HCT116 (cell line): ENCODE measurements at regions of chr15 and their contacts with region 1.

Region 1: GRCh38 chr15:78108299-78109084 is 16.1 kb downstream of the SH2D7 start:
- DNase-seq: peak; percentile 79
- ATAC-seq: peak; percentile 97
- H3K4me3 ChIP-seq: no peak overlapping the region
- H3K27ac ChIP-seq: no peak overlapping the region
- H3K4me1 ChIP-seq: 0 out of 4 replicates have a peak, but pooled peaks cover 0 to 6% of the 10 kb centered on the region in 2 experiments
- H3K27me3 ChIP-seq: no peaks in the 10 kb centered on the region
- CTCF ChIP-seq: peak; percentile 89 to 98 (median 96)
- POLR2A ChIP-seq: no peak
- RAD21 ChIP-seq: peak; percentile 92

Region 2: DNA sequence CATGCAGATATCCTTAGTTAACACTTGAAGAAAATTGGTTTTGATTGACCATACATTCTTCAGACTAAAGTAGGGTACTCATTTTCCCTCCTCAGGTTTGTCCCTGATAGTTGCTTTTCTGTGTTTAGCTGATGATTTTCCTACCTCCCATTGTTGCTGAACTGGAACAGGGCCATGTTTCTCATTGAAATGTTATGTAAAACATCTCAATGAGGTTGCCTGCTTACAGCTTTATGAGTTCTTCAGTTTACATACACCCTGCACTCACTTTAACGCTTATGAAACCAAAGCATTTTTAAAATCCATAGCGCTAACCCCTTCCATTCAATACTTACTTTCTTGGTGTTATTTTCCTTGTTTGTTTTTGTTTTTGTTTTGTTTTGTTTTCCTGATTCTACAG is 625.9 kb before region 1 on chr15:
- CTCF ChIA-PET with region 1: no interaction called
- POLR2A ChIA-PET with region 1: no interaction called
- RAD21 ChIA-PET with region 1: no interaction called
- intact Hi-C with region 1: no loop called
- DNase-seq: no peak
- ATAC-seq: no peak
- H3K4me3 ChIP-seq: no peak overlapping the region
- H3K27ac ChIP-seq: no peak overlapping the region
- H3K4me1 ChIP-seq: no peaks in the 10 kb centered on the region
- H3K27me3 ChIP-seq: no peaks in the 10 kb centered on the region
- CTCF ChIP-seq: no peak
- POLR2A ChIP-seq: no peak
- RAD21 ChIP-seq: no peak

Region 3: DNA sequence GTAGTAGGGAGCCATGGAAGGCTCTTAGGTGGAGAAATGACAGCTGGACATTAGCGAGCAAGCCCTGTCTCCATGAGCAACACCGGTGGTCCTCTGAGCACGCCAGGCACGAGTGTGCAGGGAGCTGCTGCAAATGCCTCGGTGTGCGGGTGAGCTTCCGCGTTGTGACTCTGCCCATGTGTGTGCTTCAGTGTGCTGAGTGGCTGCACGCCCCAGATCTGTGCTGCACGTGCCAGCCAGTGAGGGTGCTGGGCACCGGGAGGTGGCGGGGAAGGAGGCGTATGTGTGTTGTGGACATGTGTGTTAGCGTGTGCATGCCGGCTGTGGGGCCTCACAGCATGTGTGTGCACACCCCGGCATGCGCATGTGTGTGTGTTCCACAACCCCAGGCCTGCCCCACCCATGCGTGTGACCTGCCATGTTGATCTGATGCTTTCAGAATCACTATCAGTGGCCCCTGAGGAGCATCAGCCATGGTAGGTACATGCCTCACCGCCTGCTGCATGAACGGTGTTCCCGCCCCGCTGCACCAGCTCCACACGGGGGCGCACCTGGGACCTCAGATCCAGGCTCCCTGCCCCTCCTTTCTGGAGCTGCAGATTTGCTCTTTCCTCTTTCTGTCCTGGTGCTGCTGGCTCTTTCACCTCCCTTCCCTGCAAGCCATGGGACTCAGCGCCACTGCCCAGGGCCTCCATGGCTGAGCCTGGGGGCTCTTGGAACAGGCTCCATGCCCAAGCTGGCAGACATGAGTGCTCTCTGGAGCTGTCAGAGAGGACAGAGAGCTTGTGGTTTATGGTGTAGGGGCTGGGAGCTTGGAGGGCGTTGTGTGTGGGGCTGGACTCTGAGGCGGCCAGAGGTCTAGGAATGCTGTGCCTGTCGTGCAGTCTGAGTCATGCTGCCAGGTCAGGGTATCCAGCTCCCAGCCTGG is 200.4 kb before region 1 on chr15:
- CTCF ChIA-PET with region 1: interaction called, 5 read pairs
- POLR2A ChIA-PET with region 1: no interaction called
- RAD21 ChIA-PET with region 1: no interaction called
- intact Hi-C with region 1: loop called (anchors 1 kb)
- DNase-seq: peak; percentile 36
- ATAC-seq: peak; percentile 77
- H3K4me3 ChIP-seq: no peak overlapping the region
- H3K27ac ChIP-seq: peak overlapping the region; percentile 10; the same call in 1 of the 2 replicates
- H3K4me1 ChIP-seq: peaks cover 0 to 19% of the 10 kb centered on the region in 2 experiments; a peak in 2 of 4 replicates
- H3K27me3 ChIP-seq: no peaks in the 10 kb centered on the region
- CTCF ChIP-seq: peak; percentile 31 to 69 (median 53); a peak in 4 of 6 replicates
- POLR2A ChIP-seq: no peak
- RAD21 ChIP-seq: no peak

Region 4: GRCh38 chr15:77966540-77967290 is 141.8 kb before region 1 on chr15:
- CTCF ChIA-PET with region 1: interaction called, 19 read pairs
- POLR2A ChIA-PET with region 1: no interaction called
- RAD21 ChIA-PET with region 1: no interaction called
- intact Hi-C with region 1: loop called (anchors 1 kb)
- DNase-seq: peak; percentile 38
- ATAC-seq: peak; percentile 96
- H3K4me3 ChIP-seq: no peak overlapping the region
- H3K27ac ChIP-seq: no peak overlapping the region
- H3K4me1 ChIP-seq: no peaks in the 10 kb centered on the region
- H3K27me3 ChIP-seq: no peaks in the 10 kb centered on the region
- CTCF ChIP-seq: peak; percentile 81 to 93 (median 87)
- POLR2A ChIP-seq: no peak
- RAD21 ChIP-seq: peak; percentile 90

Region 5: GRCh38 chr15:78093242-78094020 is 15.1 kb before region 1 on chr15:
- CTCF ChIA-PET with region 1: interaction called, 11 read pairs
- POLR2A ChIA-PET with region 1: no interaction called
- RAD21 ChIA-PET with region 1: no interaction called
- intact Hi-C with region 1: no loop called
- DNase-seq: no peak
- ATAC-seq: no peak
- H3K4me3 ChIP-seq: no peak overlapping the region
- H3K27ac ChIP-seq: no peak overlapping the region
- H3K4me1 ChIP-seq: no peaks in the 10 kb centered on the region
- H3K27me3 ChIP-seq: no peaks in the 10 kb centered on the region
- CTCF ChIP-seq: no peak
- POLR2A ChIP-seq: no peak
- RAD21 ChIP-seq: no peak

Region 6: GRCh38 chr15:78195735-78196201 is 87.3 kb after region 1 on chr15:
- CTCF ChIA-PET with region 1: interaction called, 26 read pairs
- POLR2A ChIA-PET with region 1: no interaction called
- RAD21 ChIA-PET with region 1: interaction called, 6 to 7 read pairs
- intact Hi-C with region 1: loop called (anchors 1 kb)
- DNase-seq: no peak
- ATAC-seq: peak; percentile 98
- H3K4me3 ChIP-seq: no peak overlapping the region
- H3K27ac ChIP-seq: no peak overlapping the region
- H3K4me1 ChIP-seq: no peaks in the 10 kb centered on the region
- H3K27me3 ChIP-seq: no peaks in the 10 kb centered on the region
- CTCF ChIP-seq: peak; percentile 75 to 90 (median 86)
- POLR2A ChIP-seq: no peak
- RAD21 ChIP-seq: peak; percentile 85

Region 7: GRCh38 chr15:78422571-78423340 is 314.3 kb after region 1 on chr15:
- CTCF ChIA-PET with region 1: no interaction called
- POLR2A ChIA-PET with region 1: no interaction called
- RAD21 ChIA-PET with region 1: no interaction called
- intact Hi-C with region 1: loop called (anchors 2 kb)
- DNase-seq: peak; percentile 47
- ATAC-seq: peak; percentile 96
- H3K4me3 ChIP-seq: no peak overlapping the region
- H3K27ac ChIP-seq: no peak overlapping the region
- H3K4me1 ChIP-seq: peaks cover 0 to 14% of the 10 kb centered on the region in 2 experiments; a peak in 1 of 4 replicates
- H3K27me3 ChIP-seq: no peaks in the 10 kb centered on the region
- CTCF ChIP-seq: peak; percentile 61 to 98 (median 97)
- POLR2A ChIP-seq: no peak
- RAD21 ChIP-seq: peak; percentile 65